ENCODE measurements at regions of chr2 and their contacts with region 1.

Region 1: DNA sequence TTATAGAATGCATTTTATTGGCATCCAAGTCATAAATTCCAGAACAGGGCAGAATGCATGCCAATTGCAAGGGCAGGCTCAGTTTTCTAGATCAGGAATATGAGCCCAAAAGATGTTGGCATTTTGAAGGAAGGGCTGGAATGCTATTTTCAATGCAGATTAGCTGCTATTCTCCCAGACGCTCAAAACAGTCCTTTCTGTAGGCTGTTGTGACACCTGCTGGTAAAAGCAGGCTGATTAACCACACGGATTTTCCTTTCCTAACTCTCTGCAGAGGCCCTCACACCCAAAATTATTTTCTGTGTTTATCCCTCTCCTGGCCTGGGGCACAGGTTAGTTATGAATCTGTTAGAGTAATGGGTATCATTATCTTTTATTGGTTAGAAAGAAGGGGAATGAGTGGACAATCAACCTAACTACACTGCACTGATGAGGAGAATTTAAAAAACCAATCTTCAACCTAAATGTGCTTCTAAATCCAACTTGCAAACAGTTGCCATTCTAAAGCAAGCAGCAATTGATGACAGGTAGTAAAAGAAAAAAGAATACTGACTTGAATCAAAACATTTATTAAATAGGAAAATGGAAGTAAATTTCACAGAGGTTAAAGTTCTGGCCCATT is 94.0 kb downstream of the PLA2R1 start:
- DNase-seq: no peak
- ATAC-seq: peak; percentile 66
- H3K4me3 ChIP-seq: no peak overlapping the region
- H3K27ac ChIP-seq: no peak overlapping the region
- H3K4me1 ChIP-seq: peaks cover 4% of the 10 kb centered on the region; the same call in 1 of the 2 replicates
- H3K27me3 ChIP-seq: no peaks in the 10 kb centered on the region
- CTCF ChIP-seq: peak; percentile 59 to 92 (median 67); a peak in 5 of 6 replicates
- EP300 ChIP-seq: no peak
- POLR2A ChIP-seq: no peak
- RAD21 ChIP-seq: peak; percentile 92

Region 2: GRCh38 chr2:158903711-158904443 is 1064.5 kb before region 1 on chr2:
- CTCF ChIA-PET with region 1: interaction called, 11 read pairs
- POLR2A ChIA-PET with region 1: no interaction called
- RAD21 ChIA-PET with region 1: interaction called, 4 read pairs
- SMC1A ChIA-PET with region 1: interaction called, 5 read pairs
- in situ Hi-C with region 1: no loop called
- intact Hi-C with region 1: loop called (anchors 5 kb)
- DNase-seq: no peak
- ATAC-seq: no peak
- H3K4me3 ChIP-seq: no peak overlapping the region
- H3K27ac ChIP-seq: no peak overlapping the region
- H3K4me1 ChIP-seq: no peaks in the 10 kb centered on the region
- H3K27me3 ChIP-seq: no peaks in the 10 kb centered on the region; a peak in 1 of 4 replicates
- CTCF ChIP-seq: no peak
- EP300 ChIP-seq: no peak
- POLR2A ChIP-seq: no peak
- RAD21 ChIP-seq: no peak

Region 3: GRCh38 chr2:159175182-159175581 is 793.2 kb before region 1 on chr2:
- CTCF ChIA-PET with region 1: interaction called, 11 read pairs
- POLR2A ChIA-PET with region 1: no interaction called
- RAD21 ChIA-PET with region 1: interaction called, 3 read pairs
- SMC1A ChIA-PET with region 1: no interaction called
- in situ Hi-C with region 1: no loop called
- intact Hi-C with region 1: no loop called
- DNase-seq: no peak
- ATAC-seq: peak; percentile 83
- H3K4me3 ChIP-seq: no peak overlapping the region
- H3K27ac ChIP-seq: no peak overlapping the region
- H3K4me1 ChIP-seq: no peaks in the 10 kb centered on the region
- H3K27me3 ChIP-seq: no peaks in the 10 kb centered on the region
- CTCF ChIP-seq: peak; percentile 19 to 43 (median 21); a peak in 4 of 6 replicates
- EP300 ChIP-seq: no peak
- POLR2A ChIP-seq: no peak
- RAD21 ChIP-seq: peak; percentile 52

Region 4: DNA sequence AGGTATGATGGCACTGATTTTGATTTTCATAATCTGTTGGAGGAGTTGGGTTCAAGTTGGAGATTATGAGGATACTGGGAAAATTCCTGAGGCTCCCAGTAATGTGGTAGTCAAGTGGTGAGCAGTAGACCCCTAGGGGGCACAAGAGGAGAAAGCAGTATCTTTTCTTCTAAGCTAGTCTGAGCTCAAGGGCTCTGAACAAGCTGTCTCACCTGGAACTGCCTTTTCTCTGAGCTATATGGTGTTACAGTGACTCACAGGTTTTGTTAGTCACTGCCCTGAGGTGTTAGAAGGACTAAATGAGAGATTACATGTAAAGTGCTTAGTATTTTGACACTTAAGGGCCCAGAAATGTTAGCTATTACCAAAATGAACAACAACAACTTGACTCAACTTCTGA is 212.6 kb before region 1 on chr2:
- CTCF ChIA-PET with region 1: interaction called, 10 read pairs
- POLR2A ChIA-PET with region 1: no interaction called
- RAD21 ChIA-PET with region 1: interaction called, 7 read pairs
- SMC1A ChIA-PET with region 1: interaction called, 5 read pairs
- in situ Hi-C with region 1: no loop called
- intact Hi-C with region 1: no loop called
- DNase-seq: no peak
- ATAC-seq: peak; percentile 65
- H3K4me3 ChIP-seq: no peak overlapping the region
- H3K27ac ChIP-seq: no peak overlapping the region
- H3K4me1 ChIP-seq: no peaks in the 10 kb centered on the region
- H3K27me3 ChIP-seq: no peaks in the 10 kb centered on the region
- CTCF ChIP-seq: peak in 1 of 3 experiments; percentile 17; a peak in 1 of 6 replicates
- EP300 ChIP-seq: no peak
- POLR2A ChIP-seq: no peak
- RAD21 ChIP-seq: no peak

Region 5: GRCh38 chr2:159807183-159808031 is 161.0 kb before region 1 on chr2:
- CTCF ChIA-PET with region 1: interaction called, 12 read pairs
- POLR2A ChIA-PET with region 1: no interaction called
- RAD21 ChIA-PET with region 1: interaction called, 5 read pairs
- SMC1A ChIA-PET with region 1: interaction called, 6 read pairs
- in situ Hi-C with region 1: no loop called
- intact Hi-C with region 1: no loop called
- DNase-seq: no peak
- ATAC-seq: peak; percentile 64
- H3K4me3 ChIP-seq: no peak overlapping the region
- H3K27ac ChIP-seq: no peak overlapping the region
- H3K4me1 ChIP-seq: no peaks in the 10 kb centered on the region
- H3K27me3 ChIP-seq: no peaks in the 10 kb centered on the region
- CTCF ChIP-seq: peak; percentile 48 to 54 (median 53)
- EP300 ChIP-seq: no peak
- POLR2A ChIP-seq: no peak
- RAD21 ChIP-seq: peak; percentile 69

Measured in GM12878 (cell line).